Heart right ventricle (tissue), 16 donors: ENCODE measurements at regions of chr20 and their contacts with region 1.

Region 1: DNA sequence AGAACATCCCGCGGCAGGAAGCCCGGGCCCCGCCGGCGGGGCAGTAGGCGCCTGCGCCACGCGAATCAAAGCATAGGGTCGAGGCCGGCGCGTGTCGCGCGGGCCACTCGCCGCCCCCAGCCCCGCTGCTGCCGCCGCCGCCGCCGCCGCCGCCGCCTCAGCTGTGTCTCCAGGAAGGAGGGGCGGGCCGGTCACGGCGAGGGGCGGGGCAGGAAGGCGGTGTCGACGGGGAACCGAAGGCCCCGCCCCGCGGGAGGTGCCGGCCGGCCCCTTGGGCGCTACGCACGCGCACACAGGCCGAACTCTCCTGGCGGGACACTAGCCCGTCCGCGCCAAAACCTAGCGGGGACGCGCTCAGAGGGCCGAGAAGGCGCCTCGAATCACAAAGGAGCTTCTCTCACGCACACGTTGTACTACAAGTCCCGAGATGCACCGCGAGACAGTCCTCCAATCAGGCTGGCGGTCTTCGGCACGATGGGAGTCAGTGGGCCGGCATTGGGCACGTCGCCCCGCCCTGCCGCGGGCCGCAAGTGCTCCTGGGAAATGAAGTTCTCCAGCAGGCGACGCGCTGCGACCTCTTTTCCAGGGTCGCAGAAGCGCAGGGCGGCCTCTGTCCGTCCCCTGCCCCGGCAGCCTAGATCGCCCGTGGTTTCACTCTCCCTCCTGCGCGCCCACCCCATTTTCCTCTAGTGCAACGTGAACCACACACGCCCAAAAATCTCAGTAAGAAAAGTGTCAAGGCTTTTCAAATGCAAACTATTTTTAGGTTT is at the start of gene RALGAPA2:
- DNase-seq: peak; percentile 98
- ATAC-seq: peak; percentile 97 to 99 (median 99)
- H3K4me3 ChIP-seq: peak within 1 kb of the TSS; percentile 62 to 97 (median 88)
- H3K27ac ChIP-seq: peak within 1 kb of the TSS; percentile 88 to 97 (median 93)
- H3K4me1 ChIP-seq: peaks cover 0 to 39% (median 22%) of the 10 kb centered on the region in 9 donors
- H3K27me3 ChIP-seq: no peaks in the 10 kb centered on the region
- CTCF ChIP-seq: peak in 5 of 9 donors; percentile 13 to 49 (median 42)
- total RNA-seq, gene RALGAPA2: 14.4 to 26.8 (median 19.5) TPM

Region 2: GRCh38 chr20:20412750-20413149 is 299.9 kb before region 1 on chr20:
- intact Hi-C with region 1: no loop called
- DNase-seq: no peak
- ATAC-seq: no peak
- H3K4me3 ChIP-seq: no peak overlapping the region
- H3K27ac ChIP-seq: no peak overlapping the region
- H3K4me1 ChIP-seq: peaks cover 0 to 33% (median 18%) of the 10 kb centered on the region in 9 donors
- H3K27me3 ChIP-seq: no peaks in the 10 kb centered on the region
- CTCF ChIP-seq: no peak

Region 3: DNA sequence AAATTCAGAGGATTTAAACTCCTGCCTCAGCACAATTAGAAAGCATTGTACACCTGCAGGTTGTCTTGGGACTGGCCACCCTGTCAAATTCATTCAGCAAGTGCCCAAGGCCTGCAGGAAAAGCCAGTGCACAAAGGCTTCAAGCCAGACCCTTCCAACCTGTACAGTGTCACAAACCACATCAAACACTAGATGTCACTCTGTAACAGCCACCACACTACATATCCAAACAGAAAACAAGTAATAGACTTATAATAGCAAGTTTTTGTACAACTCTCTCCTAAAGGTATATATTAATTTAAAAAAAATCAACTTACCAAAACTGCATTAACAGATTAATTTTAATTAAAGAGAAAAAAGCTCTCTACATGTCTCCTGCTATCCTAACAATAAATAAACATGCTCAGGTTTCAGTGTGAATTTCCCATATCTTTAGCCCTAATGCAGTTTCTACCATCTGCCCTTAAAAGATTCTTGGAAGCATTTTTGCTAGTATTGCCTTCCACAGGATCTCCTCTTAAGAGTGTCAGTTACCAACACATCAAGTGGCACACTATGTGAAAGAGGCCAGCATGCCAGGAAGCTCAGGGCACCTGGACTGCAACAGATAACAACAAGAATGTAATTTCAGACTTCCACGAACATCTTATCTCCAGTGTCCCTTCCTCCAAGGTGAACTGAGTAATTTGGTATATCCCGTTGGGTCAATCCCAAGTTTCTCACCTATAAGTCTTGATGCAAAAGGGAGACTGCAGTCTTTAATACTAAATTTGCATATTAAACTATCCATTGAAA is 47.7 kb before region 1 on chr20:
- intact Hi-C with region 1: loop called in 1 of 10 experiments (anchors 5 kb)
- DNase-seq: peak in 1 of 2 donors; percentile 20
- ATAC-seq: peak; percentile 69 to 92 (median 83)
- H3K4me3 ChIP-seq: no peak overlapping the region
- H3K27ac ChIP-seq: no peak overlapping the region
- H3K4me1 ChIP-seq: peaks cover 0 to 39% (median 24%) of the 10 kb centered on the region in 9 donors
- H3K27me3 ChIP-seq: no peaks in the 10 kb centered on the region
- CTCF ChIP-seq: peak; percentile 37 to 81 (median 66)